IMR-90 (cell line): ENCODE measurements at regions of chr18 and their contacts with region 1.

Region 1: DNA sequence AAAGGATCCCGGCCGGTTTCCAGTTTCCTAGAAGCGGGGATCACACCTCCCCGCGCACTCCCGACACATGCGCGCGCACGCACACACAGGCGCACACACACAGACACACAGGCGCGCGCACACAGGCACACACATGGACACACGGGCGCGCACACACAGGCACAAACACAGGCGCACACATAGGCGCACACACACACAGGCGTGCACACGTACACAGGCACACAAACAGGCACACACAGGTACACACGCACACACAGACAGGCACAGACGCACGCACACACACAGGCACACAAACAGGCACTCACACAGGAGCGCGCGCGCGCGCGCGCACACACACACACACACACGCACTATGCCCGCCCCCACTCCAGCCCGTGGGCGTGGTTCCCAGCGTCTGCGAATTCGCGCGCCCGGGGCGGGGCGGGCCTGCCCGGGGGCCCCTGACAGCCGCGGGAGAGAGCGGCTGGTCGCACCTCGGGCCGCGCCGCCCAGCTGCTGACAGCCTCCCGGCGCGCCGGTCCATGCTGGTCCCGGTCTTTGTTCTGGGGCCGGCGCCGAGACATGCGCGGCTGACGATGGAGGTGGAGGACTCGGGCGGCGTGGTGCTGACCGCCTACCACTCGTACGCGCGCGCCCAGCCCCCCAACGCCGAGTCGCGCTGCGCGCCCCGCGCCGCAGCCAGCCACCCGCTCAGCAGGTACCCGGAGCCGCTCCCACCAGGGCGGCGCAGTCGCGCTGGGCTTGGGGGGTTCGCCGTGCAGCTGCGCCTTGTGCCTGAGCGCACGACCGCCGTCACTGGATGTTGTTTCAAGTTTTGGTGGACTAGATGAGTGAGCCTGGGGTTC is at the start of gene ARHGAP28:
- DNase-seq: peak; percentile 92
- ATAC-seq: peak; percentile 84
- H3K4me3 ChIP-seq: peak within 1 kb of the TSS; percentile 68
- H3K27ac ChIP-seq: peak within 1 kb of the TSS; percentile 96
- H3K4me1 ChIP-seq: peaks cover 4% of the 10 kb centered on the region
- H3K27me3 ChIP-seq: no peaks in the 10 kb centered on the region
- CTCF ChIP-seq: peak; percentile 34
- POLR2A ChIP-seq: peak; percentile 31; the same call in 1 of the 2 replicates
- RAD21 ChIP-seq: peak; percentile 17; the same call in 1 of the 2 replicates
- total RNA-seq, gene ARHGAP28: 2.8 and 3.8 TPM in 2 replicates

Region 2: GRCh38 chr18:6543330-6543908 is 186.1 kb before region 1 on chr18:
- CTCF ChIA-PET with region 1: no interaction called
- POLR2A ChIA-PET with region 1: no interaction called
- dilution Hi-C with region 1: no loop called
- in situ Hi-C with region 1: no loop called
- intact Hi-C with region 1: loop called (anchors 1 kb)
- DNase-seq: peak; percentile 55
- ATAC-seq: peak; percentile 54; the same call in 1 of the 2 replicates
- H3K4me3 ChIP-seq: no peak overlapping the region
- H3K27ac ChIP-seq: no peak overlapping the region
- H3K4me1 ChIP-seq: no peaks in the 10 kb centered on the region; the same call in 1 of the 2 replicates
- H3K27me3 ChIP-seq: no peaks in the 10 kb centered on the region
- CTCF ChIP-seq: peak; percentile 59
- POLR2A ChIP-seq: no peak
- RAD21 ChIP-seq: peak; percentile 70

Region 3: GRCh38 chr18:6624661-6625308 is 104.7 kb before region 1 on chr18:
- CTCF ChIA-PET with region 1: no interaction called
- POLR2A ChIA-PET with region 1: no interaction called
- dilution Hi-C with region 1: no loop called
- in situ Hi-C with region 1: no loop called
- intact Hi-C with region 1: loop called (anchors 5 kb)
- DNase-seq: peak; percentile 71
- ATAC-seq: peak; percentile 54
- H3K4me3 ChIP-seq: no peak overlapping the region
- H3K27ac ChIP-seq: peak overlapping the region; percentile 39; the same call in 1 of the 2 replicates
- H3K4me1 ChIP-seq: peaks cover 17% of the 10 kb centered on the region
- H3K27me3 ChIP-seq: no peaks in the 10 kb centered on the region
- CTCF ChIP-seq: no peak
- POLR2A ChIP-seq: no peak
- RAD21 ChIP-seq: no peak

Region 4: DNA sequence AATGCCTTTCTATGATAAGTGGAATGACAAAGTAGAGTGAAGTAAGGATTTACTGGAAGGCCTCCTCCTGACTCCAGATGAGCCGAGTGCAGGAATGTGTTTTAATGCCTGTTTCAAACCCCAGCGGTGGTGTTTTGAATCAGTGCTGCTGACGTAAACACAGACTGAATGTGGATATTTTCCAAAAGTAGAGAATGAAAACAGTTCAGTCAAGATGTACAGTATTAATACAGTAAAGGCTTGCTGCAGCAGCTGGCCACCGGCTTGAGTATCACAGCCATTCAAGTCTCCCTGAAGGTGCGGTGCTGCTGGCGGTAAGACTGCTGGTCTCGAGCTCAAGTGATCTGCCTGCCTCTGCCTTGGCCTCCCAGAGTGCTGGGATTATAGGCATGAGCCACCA is 46.7 kb after region 1 on chr18:
- CTCF ChIA-PET with region 1: no interaction called
- POLR2A ChIA-PET with region 1: interaction called, 4 read pairs
- dilution Hi-C with region 1: no loop called
- in situ Hi-C with region 1: no loop called
- intact Hi-C with region 1: loop called (anchors 2 kb)
- DNase-seq: peak; percentile 95
- ATAC-seq: peak; percentile 91
- H3K4me3 ChIP-seq: no peak overlapping the region
- H3K27ac ChIP-seq: peak overlapping the region; percentile 84; the same call in 1 of the 2 replicates
- H3K4me1 ChIP-seq: peaks cover 19% of the 10 kb centered on the region
- H3K27me3 ChIP-seq: no peaks in the 10 kb centered on the region
- CTCF ChIP-seq: no peak
- POLR2A ChIP-seq: no peak
- RAD21 ChIP-seq: no peak

Region 5: DNA sequence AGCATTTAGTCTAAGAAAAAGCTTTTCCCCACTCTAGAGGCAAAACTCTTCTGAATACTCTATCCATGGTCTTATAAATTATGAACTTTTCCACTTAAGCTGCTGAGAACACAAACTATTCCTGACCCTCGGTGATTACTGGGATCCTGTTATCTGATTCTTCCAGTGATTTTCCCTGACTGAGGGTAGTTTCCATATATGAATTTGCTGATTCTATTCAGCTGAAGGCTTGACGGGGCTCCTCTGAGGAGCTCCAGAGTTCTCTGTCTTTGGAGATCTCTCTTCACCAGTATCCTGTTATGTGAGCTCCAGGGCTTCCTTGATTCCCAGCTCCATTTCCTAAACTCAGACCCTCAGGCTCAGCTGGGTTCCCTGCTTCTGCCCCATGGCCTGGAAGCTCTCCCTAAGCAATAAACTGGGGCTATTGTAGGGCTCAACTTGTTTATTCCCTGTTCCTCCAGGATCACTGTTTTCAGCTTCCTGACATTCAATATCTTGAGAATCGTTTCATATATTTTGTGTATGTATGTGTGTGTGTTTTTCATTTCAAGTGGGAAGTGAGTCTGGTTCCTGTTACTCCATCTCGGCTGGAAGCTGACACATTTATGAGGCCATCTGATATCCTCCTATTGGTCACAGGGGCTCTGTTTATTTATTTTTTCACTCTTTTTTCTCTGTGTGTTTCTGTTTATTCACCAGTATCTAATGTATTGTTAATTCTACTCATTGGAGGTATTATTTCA is 78.2 kb after region 1 on chr18:
- CTCF ChIA-PET with region 1: no interaction called
- POLR2A ChIA-PET with region 1: no interaction called
- dilution Hi-C with region 1: no loop called
- in situ Hi-C with region 1: no loop called
- intact Hi-C with region 1: no loop called
- DNase-seq: no peak
- ATAC-seq: peak; percentile 29
- H3K4me3 ChIP-seq: no peak overlapping the region
- H3K27ac ChIP-seq: no peak overlapping the region
- H3K4me1 ChIP-seq: peaks cover 3% of the 10 kb centered on the region; the same call in 1 of the 2 replicates
- H3K27me3 ChIP-seq: no peaks in the 10 kb centered on the region
- CTCF ChIP-seq: no peak
- POLR2A ChIP-seq: no peak
- RAD21 ChIP-seq: no peak

Region 6: GRCh38 chr18:6857300-6857699 is 127.8 kb after region 1 on chr18:
- CTCF ChIA-PET with region 1: no interaction called
- POLR2A ChIA-PET with region 1: no interaction called
- dilution Hi-C with region 1: no loop called
- in situ Hi-C with region 1: no loop called
- intact Hi-C with region 1: loop called (anchors 1 kb)
- DNase-seq: peak; percentile 86
- ATAC-seq: peak; percentile 97
- H3K4me3 ChIP-seq: no peak overlapping the region
- H3K27ac ChIP-seq: peak overlapping the region; percentile 87; the same call in 1 of the 2 replicates
- H3K4me1 ChIP-seq: peaks cover 7% of the 10 kb centered on the region
- H3K27me3 ChIP-seq: no peaks in the 10 kb centered on the region
- CTCF ChIP-seq: no peak
- POLR2A ChIP-seq: no peak
- RAD21 ChIP-seq: no peak

Region 7: DNA sequence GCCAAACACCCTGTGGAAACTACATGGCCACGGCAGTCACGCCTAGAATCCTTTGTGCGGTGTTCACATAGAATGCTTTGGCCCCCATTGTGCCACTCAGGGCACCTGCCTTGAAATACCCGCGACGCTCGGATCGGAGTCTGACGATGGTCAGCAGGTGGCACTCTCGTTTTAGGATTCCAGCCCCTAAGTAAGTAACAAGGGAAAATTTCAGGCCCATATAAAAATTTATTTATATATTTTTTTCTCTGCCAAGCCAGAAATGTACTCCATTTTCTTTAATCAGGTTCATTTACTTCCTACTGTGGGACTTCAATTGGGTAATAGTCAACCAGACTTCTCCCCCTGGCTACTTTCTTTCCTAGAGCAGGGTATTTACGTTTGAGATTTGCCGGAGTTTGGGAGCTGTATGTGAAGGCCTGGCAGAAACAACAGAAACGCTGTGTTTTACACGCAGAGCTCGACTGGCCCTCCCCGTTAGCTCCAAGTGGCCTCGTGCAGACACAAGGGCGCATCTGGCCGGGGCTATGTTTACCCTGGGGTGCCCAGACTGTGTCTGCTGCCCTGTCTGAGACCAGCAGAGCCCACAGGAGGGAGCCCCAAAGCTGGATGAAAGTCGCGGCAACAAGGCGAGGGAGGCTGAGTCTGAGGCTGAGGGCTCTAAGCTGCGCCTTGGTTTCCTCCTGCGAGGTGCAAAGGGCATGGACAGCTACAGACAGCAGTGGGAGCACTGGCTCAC is 543.0 kb after region 1 on chr18:
- CTCF ChIA-PET with region 1: no interaction called
- POLR2A ChIA-PET with region 1: no interaction called
- dilution Hi-C with region 1: no loop called
- in situ Hi-C with region 1: no loop called
- intact Hi-C with region 1: no loop called
- DNase-seq: peak; percentile 61
- ATAC-seq: peak; percentile 87
- H3K4me3 ChIP-seq: no peak overlapping the region
- H3K27ac ChIP-seq: no peak overlapping the region
- H3K4me1 ChIP-seq: peaks cover 4% of the 10 kb centered on the region; the same call in 1 of the 2 replicates
- H3K27me3 ChIP-seq: no peaks in the 10 kb centered on the region; the same call in 1 of the 2 replicates
- CTCF ChIP-seq: peak; percentile 57
- POLR2A ChIP-seq: no peak
- RAD21 ChIP-seq: peak; percentile 67